RWPE1 (cell line): ENCODE measurements at regions of chr20 and their contacts with region 1.

Region 1: GRCh38 chr20:45934586-45935415 is at the start of gene PCIF1:
- DNase-seq: peak; percentile 100
- H3K27ac ChIP-seq: peak within 1 kb of the TSS; percentile 97
- CTCF ChIP-seq: no peak

Region 2: DNA sequence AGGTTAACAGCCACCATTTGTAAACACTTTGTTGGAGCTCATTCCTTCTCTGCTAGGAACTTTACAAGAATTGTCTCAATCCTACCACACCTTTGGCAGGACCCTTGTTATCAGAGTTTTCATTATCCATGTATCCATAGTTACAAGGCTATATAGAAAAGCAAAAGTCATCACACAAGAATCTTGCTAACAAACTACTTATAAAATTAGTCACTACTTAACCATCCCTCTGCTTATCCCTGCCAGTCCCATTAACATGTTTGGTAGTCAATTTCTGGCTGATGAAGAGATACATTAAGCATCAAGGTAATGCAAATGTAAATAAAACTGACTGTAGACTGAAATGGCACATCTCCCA is 67.0 kb before region 1 on chr20:
- CTCF ChIA-PET with region 1: no interaction called
- POLR2A ChIA-PET with region 1: interaction called, 10 read pairs
- DNase-seq: peak; percentile 89
- H3K27ac ChIP-seq: no peak overlapping the region
- CTCF ChIP-seq: no peak

Region 3: DNA sequence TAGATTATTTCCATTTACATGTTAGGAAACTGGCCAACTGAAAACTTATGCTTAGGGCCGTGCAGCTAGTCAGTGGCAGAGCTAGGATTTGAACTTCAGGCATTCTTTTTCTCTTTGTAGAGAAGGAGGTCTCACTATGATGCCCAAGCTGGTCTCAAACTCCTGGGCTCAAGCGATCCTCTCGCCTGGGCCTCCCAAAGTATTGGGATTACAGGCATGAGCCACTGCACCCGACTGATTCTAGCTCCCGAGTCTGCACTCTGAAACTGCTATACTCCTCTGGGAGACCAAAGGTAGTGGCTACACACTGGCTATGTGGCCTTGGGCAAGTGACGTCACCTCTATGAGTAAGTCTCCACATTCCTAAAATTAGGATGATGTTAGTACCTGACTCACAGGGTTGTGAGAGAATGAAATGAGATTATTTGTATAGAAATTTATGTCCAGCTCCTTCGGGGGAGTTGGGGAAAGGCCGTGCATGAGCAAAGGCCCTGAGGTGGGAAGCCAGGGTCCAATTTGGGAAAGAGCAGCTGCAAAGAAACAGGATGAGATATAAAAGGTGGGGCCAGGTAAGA is 29.2 kb before region 1 on chr20:
- CTCF ChIA-PET with region 1: no interaction called
- POLR2A ChIA-PET with region 1: no interaction called
- DNase-seq: peak; percentile 95
- H3K27ac ChIP-seq: peak overlapping the region; percentile 53
- CTCF ChIP-seq: no peak

Region 4: GRCh38 chr20:45919542-45920399 is 15.0 kb before region 1 on chr20:
- CTCF ChIA-PET with region 1: interaction called, 3 read pairs
- POLR2A ChIA-PET with region 1: interaction called, 15 read pairs
- DNase-seq: no peak
- H3K27ac ChIP-seq: no peak overlapping the region
- CTCF ChIP-seq: no peak

Region 5: DNA sequence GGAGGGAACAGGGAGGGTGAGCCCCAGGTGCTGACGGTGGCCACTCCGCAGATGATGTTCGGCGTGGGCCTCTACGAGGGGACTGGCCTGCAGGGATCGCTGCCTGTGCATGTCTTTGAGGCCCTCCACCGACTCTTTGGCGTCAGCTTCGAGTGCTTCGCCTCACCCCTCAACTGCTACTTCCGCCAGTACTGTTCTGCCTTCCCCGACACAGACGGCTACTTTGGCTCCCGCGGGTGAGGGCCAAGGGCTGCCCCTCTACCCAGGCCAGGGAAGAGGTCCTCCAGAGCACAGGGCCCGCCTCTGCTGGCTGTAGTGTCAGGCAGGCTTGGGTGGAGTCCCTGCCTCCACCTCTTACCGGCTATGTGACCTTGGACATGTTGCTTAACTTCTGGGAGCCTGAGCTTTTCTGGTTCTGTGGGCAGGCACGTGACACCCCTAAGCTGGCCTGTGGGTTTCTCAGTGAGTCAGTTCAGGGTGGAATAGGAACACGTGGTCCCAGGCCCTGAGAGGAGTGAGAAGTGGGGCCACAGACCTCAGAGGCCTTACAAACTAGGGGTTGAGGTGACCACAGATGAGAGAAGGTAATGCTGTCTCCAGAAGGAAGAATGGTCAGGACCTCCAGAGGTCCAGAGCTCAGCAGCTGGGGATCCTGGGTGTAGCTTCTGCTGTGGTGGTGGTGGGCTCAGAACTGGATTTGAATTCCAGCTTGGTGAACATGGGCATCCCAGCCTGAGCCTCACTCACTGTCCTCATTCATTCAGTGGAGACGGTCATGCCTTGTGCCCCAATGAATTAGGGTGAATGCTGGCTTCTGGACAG is 11.6 kb after region 1 on chr20:
- CTCF ChIA-PET with region 1: interaction called, 7 read pairs
- POLR2A ChIA-PET with region 1: interaction called, 35 read pairs
- DNase-seq: peak; percentile 53
- H3K27ac ChIP-seq: peak overlapping the region; percentile 86
- CTCF ChIP-seq: no peak

Region 6: GRCh38 chr20:45957081-45957941 is 22.5 kb after region 1 on chr20:
- CTCF ChIA-PET with region 1: interaction called, 21 read pairs
- POLR2A ChIA-PET with region 1: interaction called, 10 read pairs
- DNase-seq: no peak
- H3K27ac ChIP-seq: peak overlapping the region; percentile 36
- CTCF ChIP-seq: no peak

Region 7: DNA sequence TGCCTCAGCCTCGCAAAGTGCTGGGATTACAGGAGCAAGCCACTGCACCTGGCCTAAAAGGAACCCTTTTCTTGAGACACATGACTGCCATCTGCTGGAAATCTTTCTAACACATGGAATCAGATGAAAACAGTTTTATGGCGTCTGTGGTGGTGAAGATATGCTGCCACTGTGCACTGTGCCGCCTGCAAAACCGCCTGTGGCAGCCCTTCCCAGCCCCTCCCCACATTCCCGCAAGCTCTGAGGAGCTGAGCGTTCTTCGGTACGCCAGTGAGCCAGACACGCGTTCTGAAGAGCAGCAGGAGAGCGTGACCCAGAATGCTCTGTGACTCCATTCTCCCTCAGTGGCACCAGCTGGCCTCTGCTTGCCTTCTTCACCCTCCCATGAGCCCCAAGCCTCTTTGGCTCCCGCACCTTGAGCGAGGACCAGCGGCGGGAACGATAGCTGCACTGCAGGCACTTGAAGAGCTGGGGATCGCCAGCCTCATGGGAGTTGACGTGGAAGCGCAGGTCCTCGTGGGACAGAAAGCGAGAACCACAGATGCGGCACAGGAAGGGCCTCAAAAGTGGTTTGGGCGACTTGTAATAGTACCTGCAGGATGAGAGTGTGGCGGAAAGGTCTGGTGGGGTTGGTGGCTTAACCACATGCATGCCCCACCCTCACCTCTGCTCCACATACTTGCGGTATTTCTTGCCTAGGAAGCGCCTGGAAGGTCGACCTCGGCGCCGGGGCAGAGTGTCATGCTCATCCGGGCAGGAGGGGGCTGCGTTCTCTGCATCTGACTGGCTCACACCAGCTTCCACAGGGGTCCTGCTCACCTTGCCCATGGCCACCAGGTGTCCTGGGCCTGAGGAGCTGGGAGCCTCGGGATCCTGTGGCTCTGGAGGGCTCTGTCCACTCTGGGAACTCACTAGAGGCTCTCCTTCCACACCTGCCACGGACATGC is 28.5 kb after region 1 on chr20:
- CTCF ChIA-PET with region 1: interaction called, 21 read pairs
- POLR2A ChIA-PET with region 1: interaction called, 3 read pairs
- DNase-seq: no peak
- H3K27ac ChIP-seq: peak overlapping the region; percentile 5
- CTCF ChIP-seq: peak; percentile 59

Region 8: GRCh38 chr20:45971675-45972499 is 37.1 kb after region 1 on chr20 and contains the start of gene ZNF335:
- CTCF ChIA-PET with region 1: interaction called, 15 read pairs
- POLR2A ChIA-PET with region 1: interaction called, 20 read pairs
- DNase-seq: peak; percentile 100
- H3K27ac ChIP-seq: peak within 1 kb of the TSS; percentile 99
- CTCF ChIP-seq: no peak

Region 9: GRCh38 chr20:46028110-46028509 is 93.3 kb after region 1 on chr20:
- CTCF ChIA-PET with region 1: no interaction called
- POLR2A ChIA-PET with region 1: no interaction called
- DNase-seq: no peak
- H3K27ac ChIP-seq: no peak overlapping the region
- CTCF ChIP-seq: no peak

Region 10: GRCh38 chr20:47508278-47508677 is 1573.5 kb after region 1 on chr20:
- CTCF ChIA-PET with region 1: no interaction called
- POLR2A ChIA-PET with region 1: no interaction called
- DNase-seq: no peak
- H3K27ac ChIP-seq: no peak overlapping the region
- CTCF ChIP-seq: no peak